Gastrocnemius medialis (tissue), 4 donors: ENCODE measurements at regions of chr1 and their contacts with region 1.

Region 1: GRCh38 chr1:10639775-10640578 is 156.5 kb downstream of the CASZ1 start:
- DNase-seq: no peak
- ATAC-seq: no peak
- H3K4me3 ChIP-seq: no peak overlapping the region
- H3K27ac ChIP-seq: peak overlapping the region; percentile 46 to 65 (median 54)
- H3K4me1 ChIP-seq: peaks cover 22 to 34% of the 10 kb centered on the region in 2 donors
- H3K27me3 ChIP-seq: no peaks in the 10 kb centered on the region
- CTCF ChIP-seq: no peak
- POLR2A ChIP-seq: no peak

Region 2: GRCh38 chr1:10657088-10657847 is 17.3 kb after region 1 on chr1:
- in situ Hi-C with region 1: no loop called
- intact Hi-C with region 1: loop called (anchors 2 kb)
- DNase-seq: no peak
- ATAC-seq: no peak
- H3K4me3 ChIP-seq: no peak overlapping the region
- H3K27ac ChIP-seq: no peak overlapping the region
- H3K4me1 ChIP-seq: no peaks in the 10 kb centered on the region
- H3K27me3 ChIP-seq: no peaks in the 10 kb centered on the region
- CTCF ChIP-seq: no peak
- POLR2A ChIP-seq: no peak